PC-3 (cell line): ENCODE measurements at regions of chr3 and their contacts with region 1.

Region 1: GRCh38 chr3:66038726-66039589 is at the start of gene MAGI1:
- DNase-seq: peak; percentile 85
- ATAC-seq: peak; percentile 83
- H3K4me3 ChIP-seq: peak within 1 kb of the TSS; percentile 84
- H3K27ac ChIP-seq: peak within 1 kb of the TSS; percentile 67
- H3K4me1 ChIP-seq: peaks cover 6% of the 10 kb centered on the region; the same call in 1 of the 2 replicates
- H3K27me3 ChIP-seq: no peaks in the 10 kb centered on the region
- CTCF ChIP-seq: no peak
- total RNA-seq, gene MAGI1: 8.9 and 12.7 TPM in 2 replicates

Region 2: DNA sequence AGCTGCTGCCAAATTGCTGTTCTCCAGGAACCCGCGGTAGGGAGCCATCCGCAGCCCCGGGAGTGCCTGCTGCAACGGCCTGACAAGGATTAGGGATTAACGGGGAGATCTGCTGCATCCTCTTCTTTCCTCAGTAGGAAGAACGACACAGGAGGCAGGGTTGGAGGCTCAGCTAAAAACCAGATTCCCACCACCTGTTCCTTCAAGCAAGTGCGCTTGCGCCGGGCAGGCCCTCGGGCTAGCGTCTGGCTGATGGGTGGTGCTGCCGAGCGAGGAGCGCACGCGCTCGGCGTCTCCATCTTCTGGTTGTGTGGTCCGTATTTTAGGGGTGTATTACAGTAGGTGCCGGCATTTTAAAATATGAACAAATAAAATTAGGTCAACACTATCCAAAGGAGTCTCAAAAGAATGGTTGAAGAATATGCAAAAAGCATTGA is 156.4 kb after region 1 on chr3:
- CTCF ChIA-PET with region 1: no interaction called
- POLR2A ChIA-PET with region 1: no interaction called
- intact Hi-C with region 1: loop called (anchors 5 kb)
- DNase-seq: peak; percentile 46
- ATAC-seq: peak; percentile 96
- H3K4me3 ChIP-seq: peak overlapping the region; percentile 64
- H3K27ac ChIP-seq: no peak overlapping the region
- H3K4me1 ChIP-seq: no peaks in the 10 kb centered on the region
- H3K27me3 ChIP-seq: no peaks in the 10 kb centered on the region
- CTCF ChIP-seq: no peak; the same call in 1 of the 2 replicates